Activated naive CD4-positive, alpha-beta T cell treated with anti-CD3 and anti-CD28 coated beads for 36 hours (primary cell): ENCODE measurements at regions of chr1 and their contacts with region 1.

Region 1: GRCh38 chr1:176206961-176207902 is at the start of gene COP1:
- DNase-seq: peak; percentile 97
- H3K4me3 Mint-ChIP-seq: peak within 1 kb of the TSS; percentile 98
- H3K27ac Mint-ChIP-seq: peak within 1 kb of the TSS; percentile 98
- H3K4me1 Mint-ChIP-seq: peaks cover 30% of the 10 kb centered on the region
- H3K27me3 Mint-ChIP-seq: no peaks in the 10 kb centered on the region
- total RNA-seq, gene COP1: 37.4 to 37.6 TPM

Region 2: DNA sequence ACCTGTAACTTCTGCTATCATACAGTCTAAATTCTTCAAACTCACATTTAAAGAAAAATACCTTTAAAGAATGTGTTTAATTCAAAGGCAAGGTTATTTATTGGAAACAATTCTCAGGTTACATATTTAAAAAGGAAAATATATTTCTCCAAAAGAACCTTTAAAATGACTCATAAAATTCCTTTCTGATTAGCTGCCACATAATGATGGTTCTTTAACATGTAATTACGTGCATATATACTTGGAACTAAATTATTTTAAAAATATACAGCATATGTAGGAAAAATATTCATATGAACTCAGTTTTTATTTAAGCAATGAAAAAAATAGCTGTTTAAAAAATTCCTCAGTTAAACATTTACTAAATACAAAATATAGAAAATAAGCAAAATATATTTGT is 173.8 kb before region 1 on chr1:
- CTCF ChIA-PET with region 1: no interaction called
- intact Hi-C with region 1: loop called (anchors 1 kb)
- DNase-seq: no peak
- H3K4me3 Mint-ChIP-seq: no peak overlapping the region
- H3K27ac Mint-ChIP-seq: no peak overlapping the region
- H3K4me1 Mint-ChIP-seq: peaks cover 2% of the 10 kb centered on the region
- H3K27me3 Mint-ChIP-seq: no peaks in the 10 kb centered on the region

Region 3: GRCh38 chr1:176159993-176160392 is 47.2 kb before region 1 on chr1:
- CTCF ChIA-PET with region 1: no interaction called
- intact Hi-C with region 1: loop called (anchors 1 kb)
- DNase-seq: no peak
- H3K4me3 Mint-ChIP-seq: peak overlapping the region; percentile 27
- H3K27ac Mint-ChIP-seq: peak overlapping the region; percentile 82
- H3K4me1 Mint-ChIP-seq: peaks cover 43% of the 10 kb centered on the region
- H3K27me3 Mint-ChIP-seq: no peaks in the 10 kb centered on the region

Region 4: GRCh38 chr1:176193023-176193422 is 14.2 kb before region 1 on chr1:
- CTCF ChIA-PET with region 1: no interaction called
- intact Hi-C with region 1: loop called (anchors 1 kb)
- DNase-seq: no peak
- H3K4me3 Mint-ChIP-seq: no peak overlapping the region
- H3K27ac Mint-ChIP-seq: peak overlapping the region; percentile 44
- H3K4me1 Mint-ChIP-seq: peaks cover 75% of the 10 kb centered on the region
- H3K27me3 Mint-ChIP-seq: no peaks in the 10 kb centered on the region